ENCODE measurements at regions of chr1 and their contacts with region 1.

Region 1: DNA sequence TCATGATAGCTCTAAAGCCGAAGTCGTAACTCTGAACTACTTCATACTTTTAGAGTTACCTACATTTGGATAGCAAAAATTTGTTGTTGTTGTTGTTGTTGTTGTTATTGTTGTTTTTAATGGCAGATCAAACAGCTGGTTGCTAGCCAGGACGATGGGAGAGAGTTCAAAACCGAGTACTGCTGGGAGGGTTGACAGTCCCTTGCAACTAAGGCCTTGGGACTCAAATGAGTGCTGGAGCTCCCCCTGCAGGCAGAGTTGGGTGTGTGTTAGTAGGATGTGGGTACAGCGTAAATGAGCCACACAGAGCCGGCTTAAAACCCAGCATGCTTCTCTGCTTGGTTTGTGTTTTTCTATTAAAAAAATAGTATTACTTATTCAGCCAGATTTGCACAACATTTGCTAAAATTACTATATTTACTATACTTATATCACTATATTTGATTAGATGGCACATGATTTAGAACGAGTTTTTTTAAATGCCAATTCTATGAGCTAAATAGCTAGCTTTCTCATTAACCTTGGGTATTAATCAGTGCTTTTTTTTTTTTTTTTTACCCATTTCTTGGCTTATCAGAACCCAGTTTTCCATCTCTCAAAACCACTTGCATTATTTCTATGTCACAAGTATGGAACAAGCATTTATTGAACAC is 129.2 kb upstream of the SYT6 start:
- DNase-seq: peak; percentile 93
- H3K4me3 Mint-ChIP-seq: no peak overlapping the region
- H3K27ac Mint-ChIP-seq: no peak overlapping the region
- H3K4me1 Mint-ChIP-seq: no peaks in the 10 kb centered on the region
- H3K27me3 Mint-ChIP-seq: peaks cover 19% of the 10 kb centered on the region
- CTCF ChIP-seq: peak; percentile 74

Region 2: DNA sequence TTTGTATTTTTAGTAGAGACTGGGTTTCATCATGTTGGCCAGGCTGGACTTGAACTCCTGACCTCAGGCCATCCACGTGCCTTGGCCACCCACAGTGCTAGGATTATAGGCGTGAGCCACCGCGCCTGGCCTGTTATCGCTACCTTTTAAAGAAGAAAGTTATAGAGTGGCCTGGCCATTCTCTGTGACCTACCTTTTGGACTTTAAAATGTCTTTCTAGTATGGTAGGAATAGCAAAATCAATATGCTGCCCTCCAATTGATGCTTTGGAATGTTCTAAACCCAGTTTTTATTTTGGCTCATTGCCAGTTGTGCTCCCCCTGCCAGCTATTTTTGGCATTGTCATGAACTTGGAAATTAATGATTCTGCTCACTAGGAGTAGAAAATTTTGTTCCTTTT is 333.9 kb before region 1 on chr1:
- CTCF ChIA-PET with region 1: interaction called, 12 read pairs
- POLR2A ChIA-PET with region 1: no interaction called
- intact Hi-C with region 1: no loop called
- DNase-seq: no peak
- H3K4me3 Mint-ChIP-seq: no peak overlapping the region
- H3K27ac Mint-ChIP-seq: no peak overlapping the region
- H3K4me1 Mint-ChIP-seq: peaks cover 5% of the 10 kb centered on the region
- H3K27me3 Mint-ChIP-seq: no peaks in the 10 kb centered on the region
- CTCF ChIP-seq: peak; percentile 33

Region 3: DNA sequence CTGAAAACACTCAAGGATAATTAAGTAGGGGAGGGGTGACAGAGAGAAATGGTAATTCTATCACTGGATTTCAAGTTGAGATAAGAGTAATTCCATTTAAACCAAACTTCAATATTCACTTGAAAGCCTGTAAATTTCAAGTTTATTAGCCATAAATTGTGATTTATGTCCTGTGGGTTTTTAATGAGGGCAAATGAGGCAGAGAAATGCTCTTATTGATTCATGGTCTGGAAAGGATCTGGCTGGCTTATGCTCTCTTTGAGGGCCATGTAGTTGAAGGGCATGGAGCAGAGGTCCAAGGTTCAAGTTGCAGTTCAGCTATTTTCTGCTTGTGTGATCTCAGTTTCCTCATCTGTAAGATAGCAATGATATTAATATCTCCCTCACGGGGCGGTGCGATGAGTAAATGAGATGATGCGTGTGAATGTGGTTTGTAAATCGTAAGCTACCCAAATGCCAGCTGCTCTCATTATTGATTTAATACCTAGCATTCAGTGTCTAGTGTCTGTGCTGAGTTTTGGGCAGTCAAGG is 291.3 kb before region 1 on chr1:
- CTCF ChIA-PET with region 1: interaction called, 13 read pairs
- POLR2A ChIA-PET with region 1: no interaction called
- intact Hi-C with region 1: no loop called
- DNase-seq: no peak
- H3K4me3 Mint-ChIP-seq: no peak overlapping the region
- H3K27ac Mint-ChIP-seq: no peak overlapping the region
- H3K4me1 Mint-ChIP-seq: no peaks in the 10 kb centered on the region
- H3K27me3 Mint-ChIP-seq: no peaks in the 10 kb centered on the region
- CTCF ChIP-seq: no peak

Region 4: GRCh38 chr1:114081437-114082303 is 201.2 kb before region 1 on chr1:
- CTCF ChIA-PET with region 1: interaction called, 10 read pairs
- POLR2A ChIA-PET with region 1: no interaction called
- intact Hi-C with region 1: no loop called
- DNase-seq: no peak
- H3K4me3 Mint-ChIP-seq: no peak overlapping the region
- H3K27ac Mint-ChIP-seq: no peak overlapping the region
- H3K4me1 Mint-ChIP-seq: no peaks in the 10 kb centered on the region
- H3K27me3 Mint-ChIP-seq: peaks cover 30% of the 10 kb centered on the region
- CTCF ChIP-seq: no peak

Region 5: GRCh38 chr1:114189398-114189797 is 93.5 kb before region 1 on chr1:
- CTCF ChIA-PET with region 1: no interaction called
- POLR2A ChIA-PET with region 1: no interaction called
- intact Hi-C with region 1: no loop called
- DNase-seq: no peak
- H3K4me3 Mint-ChIP-seq: no peak overlapping the region
- H3K27ac Mint-ChIP-seq: no peak overlapping the region
- H3K4me1 Mint-ChIP-seq: no peaks in the 10 kb centered on the region
- H3K27me3 Mint-ChIP-seq: peaks cover 79% of the 10 kb centered on the region
- CTCF ChIP-seq: no peak

Region 6: GRCh38 chr1:114388432-114389274 is 105.8 kb after region 1 on chr1:
- CTCF ChIA-PET with region 1: no interaction called
- POLR2A ChIA-PET with region 1: no interaction called
- intact Hi-C with region 1: no loop called
- DNase-seq: no peak
- H3K4me3 Mint-ChIP-seq: no peak overlapping the region
- H3K27ac Mint-ChIP-seq: no peak overlapping the region
- H3K4me1 Mint-ChIP-seq: no peaks in the 10 kb centered on the region
- H3K27me3 Mint-ChIP-seq: no peaks in the 10 kb centered on the region
- CTCF ChIP-seq: no peak